ENCODE measurements at regions of chr6 and their contacts with region 1.

Region 1: GRCh38 chr6:26342106-26343004 is 22.6 kb upstream of the BTN3A2 start:
- DNase-seq: no peak
- H3K4me3 ChIP-seq: peak overlapping the region; percentile 48
- H3K4me3 Mint-ChIP-seq: peak overlapping the region; percentile 41 to 91 (median 86)
- H3K27ac ChIP-seq: no peak overlapping the region
- H3K27ac Mint-ChIP-seq: peak overlapping the region in 7 of 8 donors; percentile 48 to 95 (median 73)
- H3K4me1 ChIP-seq: no peaks in the 10 kb centered on the region
- H3K4me1 Mint-ChIP-seq: peaks cover 9 to 12% (median 10%) of the 10 kb centered on the region in 3 donors
- H3K27me3 ChIP-seq: no peaks in the 10 kb centered on the region
- H3K27me3 Mint-ChIP-seq: peaks cover 0 to 2% of the 10 kb centered on the region in 2 donors

Region 2: GRCh38 chr6:26285143-26286134 is 56.9 kb before region 1 on chr6:
- CTCF ChIA-PET with region 1: no interaction called
- POLR2A ChIA-PET with region 1: no interaction called
- DNase-seq: peak; percentile 89 to 98 (median 91)
- H3K4me3 ChIP-seq: peak overlapping the region; percentile 75
- H3K4me3 Mint-ChIP-seq: peak overlapping the region; percentile 83 to 97 (median 89)
- H3K27ac ChIP-seq: peak overlapping the region; percentile 97
- H3K27ac Mint-ChIP-seq: peak overlapping the region; percentile 93 to 98 (median 98)
- H3K4me1 ChIP-seq: peaks cover 15% of the 10 kb centered on the region
- H3K4me1 Mint-ChIP-seq: peaks cover 22 to 29% (median 23%) of the 10 kb centered on the region in 3 donors
- H3K27me3 ChIP-seq: no peaks in the 10 kb centered on the region
- H3K27me3 Mint-ChIP-seq: peaks cover 0 to 20% of the 10 kb centered on the region in 2 donors

Region 3: DNA sequence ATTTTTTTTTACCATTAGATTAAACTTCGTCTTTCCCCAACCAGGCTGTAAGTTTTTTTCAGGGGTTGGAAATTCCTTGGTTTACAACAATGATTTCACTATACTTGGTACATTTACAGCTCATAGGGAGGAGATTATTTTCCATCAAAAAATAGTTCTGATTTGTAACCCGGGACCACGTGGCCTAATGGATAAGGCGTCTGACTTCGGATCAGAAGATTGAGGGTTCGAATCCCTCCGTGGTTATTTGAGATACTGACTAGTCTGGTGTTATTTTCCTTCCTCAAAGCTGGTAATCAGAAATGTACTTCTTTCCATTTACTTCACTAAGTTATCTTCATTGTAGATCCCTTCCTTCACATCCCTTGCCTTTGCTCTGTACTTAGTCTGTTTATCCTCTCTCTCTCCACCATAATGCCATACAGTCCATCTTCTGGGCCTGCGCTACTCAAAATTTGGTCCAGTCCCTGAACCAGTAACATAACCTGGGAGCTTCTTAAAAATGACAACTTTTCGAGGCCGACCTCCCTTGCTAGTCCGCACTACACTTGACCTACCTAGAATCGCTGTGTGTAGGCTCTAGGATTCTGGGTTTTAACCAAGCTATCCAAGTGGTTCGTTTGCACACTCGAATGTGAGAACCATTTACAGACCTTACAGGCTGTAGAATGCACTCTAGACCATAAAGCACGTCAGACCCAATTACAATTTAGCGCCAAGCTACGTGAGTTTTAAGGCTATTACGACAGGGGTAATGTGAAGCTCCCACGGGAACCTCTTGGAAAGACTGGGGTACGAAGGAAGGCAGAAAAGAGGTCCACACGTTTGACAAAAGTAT is 19.5 kb before region 1 on chr6:
- CTCF ChIA-PET with region 1: interaction called, 13 read pairs
- POLR2A ChIA-PET with region 1: interaction called, 3 read pairs
- DNase-seq: peak in 4 of 5 donors; percentile 38 to 79 (median 70)
- H3K4me3 ChIP-seq: peak overlapping the region; percentile 62
- H3K4me3 Mint-ChIP-seq: peak overlapping the region; percentile 72 to 93 (median 87)
- H3K27ac ChIP-seq: peak overlapping the region; percentile 69
- H3K27ac Mint-ChIP-seq: peak overlapping the region; percentile 80 to 94 (median 85)
- H3K4me1 ChIP-seq: no peaks in the 10 kb centered on the region
- H3K4me1 Mint-ChIP-seq: peaks cover 24 to 37% (median 28%) of the 10 kb centered on the region in 3 donors
- H3K27me3 ChIP-seq: no peaks in the 10 kb centered on the region
- H3K27me3 Mint-ChIP-seq: peaks cover 5 to 19% of the 10 kb centered on the region in 2 donors

Region 4: DNA sequence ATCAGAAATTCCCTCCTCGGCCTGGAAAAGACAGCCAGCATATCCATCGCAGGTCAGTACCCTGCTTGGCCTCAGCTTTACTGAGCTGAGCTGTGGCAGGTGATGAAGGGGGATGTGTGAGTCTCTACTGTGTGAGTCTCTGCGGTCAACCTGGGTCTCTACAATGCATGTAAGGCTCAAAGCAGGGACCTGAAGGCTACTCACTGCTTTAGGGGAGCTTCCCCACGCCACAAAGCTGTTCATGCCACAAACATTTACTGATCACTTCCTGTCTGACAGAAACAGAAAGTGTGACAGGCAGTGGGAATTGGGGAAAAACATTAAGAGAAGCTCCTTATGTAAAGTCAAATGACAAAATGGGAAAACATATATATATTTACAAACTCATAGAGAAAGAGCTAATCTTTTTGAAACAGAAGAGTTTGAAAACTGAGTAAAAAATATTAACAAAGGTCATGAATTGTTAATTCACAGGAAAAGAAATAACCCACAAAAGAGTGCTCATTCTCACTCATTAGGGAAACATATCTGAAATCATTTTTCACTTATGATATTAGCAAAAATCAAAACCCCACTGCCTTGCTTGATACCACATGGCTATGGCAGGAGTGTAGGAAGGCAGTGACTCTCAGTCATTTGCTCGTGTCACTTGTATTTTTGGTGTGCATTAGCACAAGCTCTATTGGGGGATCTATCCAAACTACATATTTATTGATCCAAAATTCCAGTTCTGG is 103.7 kb after region 1 on chr6:
- CTCF ChIA-PET with region 1: interaction called, 12 read pairs
- POLR2A ChIA-PET with region 1: no interaction called
- DNase-seq: peak; percentile 1 to 59 (median 22)
- H3K4me3 ChIP-seq: no peak overlapping the region
- H3K4me3 Mint-ChIP-seq: peak overlapping the region; percentile 49 to 86 (median 74)
- H3K27ac ChIP-seq: no peak overlapping the region
- H3K27ac Mint-ChIP-seq: peak overlapping the region; percentile 71 to 96 (median 89)
- H3K4me1 ChIP-seq: peaks cover 40% of the 10 kb centered on the region
- H3K4me1 Mint-ChIP-seq: peaks cover 55 to 80% (median 69%) of the 10 kb centered on the region in 3 donors
- H3K27me3 ChIP-seq: no peaks in the 10 kb centered on the region
- H3K27me3 Mint-ChIP-seq: no peaks in the 10 kb centered on the region

Region 5: DNA sequence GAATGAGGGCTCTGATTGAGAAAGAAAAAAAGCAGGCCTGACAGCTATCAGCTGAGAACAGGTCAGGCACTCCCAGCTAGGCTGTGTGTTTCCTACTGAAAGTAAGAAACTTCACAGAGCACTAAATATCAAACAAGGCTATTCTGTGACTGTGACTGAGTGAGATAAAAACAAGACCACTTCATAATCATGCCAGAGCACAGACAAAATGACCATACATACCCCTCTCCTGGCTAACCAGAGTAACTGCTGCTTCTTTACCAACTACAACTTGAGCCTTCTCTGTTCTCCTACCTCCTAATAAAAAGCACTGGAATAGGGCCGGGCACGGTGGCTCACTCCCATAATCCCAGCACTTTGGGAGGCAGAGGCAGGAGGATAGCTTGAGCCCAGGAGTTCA is 150.9 kb after region 1 on chr6:
- CTCF ChIA-PET with region 1: interaction called, 14 read pairs
- POLR2A ChIA-PET with region 1: no interaction called
- DNase-seq: peak in 2 of 5 donors; percentile 9 to 18
- H3K4me3 ChIP-seq: no peak overlapping the region
- H3K4me3 Mint-ChIP-seq: no peak overlapping the region
- H3K27ac ChIP-seq: no peak overlapping the region
- H3K27ac Mint-ChIP-seq: no peak overlapping the region
- H3K4me1 ChIP-seq: no peaks in the 10 kb centered on the region
- H3K4me1 Mint-ChIP-seq: no peaks in the 10 kb centered on the region
- H3K27me3 ChIP-seq: no peaks in the 10 kb centered on the region
- H3K27me3 Mint-ChIP-seq: peaks cover 3 to 4% of the 10 kb centered on the region in 2 donors

Region 6: GRCh38 chr6:26596579-26597388 is 254.4 kb after region 1 on chr6 and contains the start of gene ABT1:
- CTCF ChIA-PET with region 1: interaction called, 46 read pairs
- POLR2A ChIA-PET with region 1: no interaction called
- DNase-seq: peak; percentile 94 to 97 (median 96)
- H3K4me3 ChIP-seq: peak within 1 kb of the TSS; percentile 72
- H3K4me3 Mint-ChIP-seq: no peak within 1 kb of the TSS
- H3K27ac ChIP-seq: peak within 1 kb of the TSS; percentile 90
- H3K27ac Mint-ChIP-seq: no peak within 1 kb of the TSS
- H3K4me1 ChIP-seq: peaks cover 21% of the 10 kb centered on the region
- H3K4me1 Mint-ChIP-seq: peaks cover 8 to 13% (median 9%) of the 10 kb centered on the region in 3 donors
- H3K27me3 ChIP-seq: peaks cover 5% of the 10 kb centered on the region
- H3K27me3 Mint-ChIP-seq: peaks cover 0 to 30% of the 10 kb centered on the region in 2 donors
- total RNA-seq, gene ABT1: 34.5 to 36.1 TPM

Measured in CD8-positive, alpha-beta memory T cell (primary cell).